ENCODE measurements at regions of chr1 and their contacts with region 1.

Region 1: DNA sequence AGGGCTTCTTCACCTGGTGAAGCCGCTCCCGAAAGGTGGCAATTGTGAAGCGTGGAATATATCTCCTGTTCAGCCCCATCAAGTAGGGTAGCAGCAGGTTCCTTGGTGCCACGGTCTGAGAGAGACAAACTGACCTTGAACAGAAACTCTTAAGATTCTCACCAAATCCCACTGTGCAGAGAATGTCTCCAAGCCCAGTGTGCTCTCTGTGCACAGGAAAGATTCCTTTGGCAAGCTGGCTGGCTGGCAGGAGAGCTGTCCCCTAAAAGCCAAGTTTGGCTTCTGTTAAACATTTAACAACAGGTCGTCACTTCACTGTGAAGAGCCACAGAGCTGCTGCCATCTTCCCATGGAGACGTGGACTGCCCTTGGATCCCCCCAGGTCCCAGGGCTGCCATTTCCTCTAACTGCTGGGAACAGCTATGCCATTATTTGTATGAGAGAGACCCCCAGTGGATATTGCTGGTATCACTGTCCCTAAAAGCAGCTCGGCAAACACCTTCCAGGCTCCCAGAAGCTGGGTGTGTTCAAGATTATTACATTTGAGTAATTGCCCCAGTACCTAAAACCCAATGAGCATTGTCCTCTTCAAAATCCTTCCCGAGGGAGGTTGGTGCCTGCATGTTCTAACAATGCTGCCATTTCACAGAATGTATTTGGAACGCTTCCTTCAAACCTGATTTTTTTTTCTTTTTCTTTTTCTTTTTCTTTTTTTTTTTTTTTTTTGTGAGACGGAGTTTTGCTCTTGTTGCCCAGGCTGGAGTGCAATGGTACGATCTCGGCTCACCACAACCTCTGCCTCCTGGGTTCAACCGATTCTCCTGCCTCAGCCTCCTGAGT is 71.8 kb downstream of the CD58 start:
- DNase-seq: peak; percentile 48 to 72
- ATAC-seq: peak; percentile 63 to 80 (median 70)
- H3K4me3 ChIP-seq: no peak overlapping the region
- H3K27ac ChIP-seq: peak overlapping the region in 6 of 10 donors; percentile 18 to 80 (median 40)
- H3K4me1 ChIP-seq: peaks cover 0 to 75% (median 37%) of the 10 kb centered on the region in 9 donors
- H3K27me3 ChIP-seq: no peaks in the 10 kb centered on the region
- CTCF ChIP-seq: peak; percentile 64 to 87 (median 82)

Region 2: GRCh38 chr1:116139592-116140134 is 359.3 kb before region 1 on chr1:
- intact Hi-C with region 1: loop called in 6 of 10 experiments (anchors 1 to 5 kb)
- DNase-seq: no peak
- ATAC-seq: peak in 1 of 8 donors; percentile 38
- H3K4me3 ChIP-seq: no peak overlapping the region
- H3K27ac ChIP-seq: no peak overlapping the region
- H3K4me1 ChIP-seq: peaks cover 0 to 8% (median 0%) of the 10 kb centered on the region in 9 donors
- H3K27me3 ChIP-seq: no peaks in the 10 kb centered on the region
- CTCF ChIP-seq: no peak